A549 (cell line): ENCODE measurements at regions of chr7 and their contacts with region 1.

Region 1: DNA sequence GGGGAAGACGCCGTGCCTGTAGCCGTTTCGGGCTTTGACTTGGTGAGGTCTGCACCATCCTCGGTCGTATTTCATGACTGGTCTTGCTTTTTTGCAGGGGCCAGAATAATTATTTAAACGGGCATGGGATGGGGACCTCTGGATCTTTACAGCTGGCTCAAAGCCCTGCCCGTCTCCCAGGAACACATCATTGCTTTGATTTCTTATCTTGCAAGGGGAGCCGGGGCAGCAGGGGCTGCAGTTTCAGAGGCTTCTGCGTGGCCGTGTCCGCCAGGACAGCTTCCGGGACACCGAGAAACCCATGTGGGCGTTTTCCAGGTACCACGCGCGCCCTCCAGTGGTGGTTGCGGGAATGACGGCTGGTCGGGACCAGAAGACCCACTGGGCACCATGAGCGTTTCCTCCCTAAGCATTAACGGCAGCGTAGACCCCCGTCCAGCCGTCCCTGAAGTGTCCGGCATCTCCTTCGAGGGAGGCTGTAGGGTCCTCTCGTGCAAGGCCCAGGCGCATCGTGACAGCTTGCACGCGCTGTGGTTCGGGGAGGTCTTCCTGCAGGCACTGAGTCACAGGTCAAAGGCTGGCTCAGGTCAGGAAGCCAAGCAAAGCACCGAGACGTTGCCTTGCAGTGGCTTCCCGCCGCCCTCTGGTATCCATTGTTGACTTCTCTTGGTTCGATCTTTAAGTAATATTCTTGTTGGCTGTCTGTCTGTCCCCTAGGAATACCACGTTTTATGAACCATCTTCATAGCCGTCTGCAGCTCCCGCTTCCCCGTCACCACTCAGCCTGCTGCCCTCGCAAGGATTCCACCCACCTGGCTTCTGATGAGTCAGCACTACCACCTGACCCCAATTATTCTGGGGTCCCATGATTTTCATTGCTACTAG is 16.2 kb upstream of the ZFAND2A start:
- DNase-seq: peak; percentile 79 to 85
- ATAC-seq: peak; percentile 86 to 92
- H3K4me3 ChIP-seq: peak overlapping the region; percentile 34
- H3K27ac ChIP-seq: peak overlapping the region; percentile 78 to 87
- H3K4me1 ChIP-seq: peaks cover 11% of the 10 kb centered on the region; the same call in 2 of the 3 replicates
- CTCF ChIP-seq: peak; percentile 86
- EP300 ChIP-seq: no peak
- POLR2A ChIP-seq: 0 out of 2 replicates have a peak, but pooled peaks have one; percentile 23
- RAD21 ChIP-seq: peak; percentile 70 to 79

Region 2: GRCh38 chr7:974820-975681 is 201.2 kb before region 1 on chr7 and contains the start of gene COX19:
- CTCF ChIA-PET with region 1: interaction called, 10 read pairs
- POLR2A ChIA-PET with region 1: no interaction called
- DNase-seq: peak; percentile 68 to 92
- ATAC-seq: peak; percentile 86 to 93
- H3K4me3 ChIP-seq: peak within 1 kb of the TSS; percentile 77
- H3K27ac ChIP-seq: peak within 1 kb of the TSS; percentile 81 to 96
- H3K4me1 ChIP-seq: peaks cover 24% of the 10 kb centered on the region
- CTCF ChIP-seq: no peak
- EP300 ChIP-seq: no peak
- POLR2A ChIP-seq: peak; percentile 68
- RAD21 ChIP-seq: no peak
- polyA plus RNA-seq, gene COX19: 5.4 and 7.6 TPM in 2 replicates

Region 3: DNA sequence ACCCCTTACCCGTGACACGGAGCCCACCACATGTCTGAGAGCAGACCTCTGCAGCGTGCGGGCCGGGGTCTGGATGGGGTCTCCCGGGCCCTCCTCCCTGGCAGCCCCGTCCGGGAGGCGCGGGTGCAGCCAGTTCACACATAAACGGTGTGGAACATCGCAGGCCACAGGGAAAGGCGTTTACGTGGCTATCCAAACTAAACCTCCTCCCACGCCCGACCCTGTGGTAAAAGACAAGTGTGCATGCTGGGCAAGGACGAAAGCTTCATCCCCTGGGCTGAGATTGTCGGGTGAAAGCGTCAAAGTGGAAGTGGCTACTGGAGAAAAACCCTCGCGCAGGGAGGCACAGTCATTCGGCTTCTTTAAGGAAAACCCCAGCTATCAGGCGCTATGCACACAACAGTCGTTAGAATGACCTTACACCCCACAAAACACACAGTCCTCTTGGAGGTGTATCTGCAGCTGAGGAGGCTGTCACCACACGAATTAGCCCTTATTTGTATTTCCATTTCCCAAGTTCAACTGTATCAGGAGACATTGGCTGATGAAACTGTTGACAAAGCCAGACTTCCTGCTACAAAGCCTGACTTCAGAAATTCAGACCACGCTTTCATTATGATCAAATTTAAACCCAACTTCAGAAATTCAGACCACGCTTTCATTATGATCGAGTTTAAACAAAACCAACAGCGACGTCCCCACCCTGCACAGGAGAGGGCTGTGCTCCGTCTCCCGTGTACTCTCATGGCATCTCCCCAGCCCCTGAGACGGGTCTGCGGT is 73.0 kb before region 1 on chr7:
- CTCF ChIA-PET with region 1: interaction called, 12 read pairs
- POLR2A ChIA-PET with region 1: no interaction called
- DNase-seq: no peak
- ATAC-seq: no peak
- H3K4me3 ChIP-seq: no peak overlapping the region
- H3K27ac ChIP-seq: no peak overlapping the region
- H3K4me1 ChIP-seq: no peaks in the 10 kb centered on the region
- CTCF ChIP-seq: no peak
- EP300 ChIP-seq: no peak
- POLR2A ChIP-seq: no peak
- RAD21 ChIP-seq: no peak

Region 4: DNA sequence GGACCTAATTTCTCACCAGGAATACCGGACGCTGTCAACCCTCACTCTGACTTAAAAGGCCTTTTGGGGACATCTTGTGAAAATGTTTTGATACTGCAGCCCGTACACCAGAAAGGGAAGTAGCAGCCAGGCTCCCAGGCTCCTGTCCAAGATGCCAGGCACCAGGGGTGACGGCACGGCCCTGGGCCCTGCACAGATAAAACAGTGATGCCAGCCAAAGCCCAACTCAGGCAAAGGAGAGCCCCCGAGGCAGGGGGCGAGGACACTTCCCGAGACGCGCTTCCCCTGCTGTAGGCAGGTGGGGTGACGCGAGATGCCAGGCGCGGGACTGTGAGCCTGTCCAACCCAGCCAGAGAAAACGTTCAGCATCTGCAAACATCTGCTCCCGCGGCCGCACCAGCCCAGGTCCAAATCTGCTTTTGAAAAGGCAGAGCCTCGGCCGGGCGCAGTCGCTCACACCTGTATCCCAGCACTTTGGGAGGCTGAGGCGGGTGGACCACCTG is 31.9 kb before region 1 on chr7:
- CTCF ChIA-PET with region 1: interaction called, 18 read pairs
- POLR2A ChIA-PET with region 1: no interaction called
- DNase-seq: peak in 1 of 2 experiments; percentile 41
- ATAC-seq: peak; percentile 64 to 75; a peak in 5 of 6 replicates
- H3K4me3 ChIP-seq: no peak overlapping the region
- H3K27ac ChIP-seq: no peak overlapping the region
- H3K4me1 ChIP-seq: no peaks in the 10 kb centered on the region
- CTCF ChIP-seq: no peak
- EP300 ChIP-seq: no peak
- POLR2A ChIP-seq: no peak
- RAD21 ChIP-seq: peak in 1 of 2 experiments; percentile 35; a peak in 2 of 5 replicates

Region 5: GRCh38 chr7:1187127-1187526 is 10.9 kb after region 1 on chr7:
- CTCF ChIA-PET with region 1: interaction called, 57 read pairs
- POLR2A ChIA-PET with region 1: no interaction called
- DNase-seq: no peak
- ATAC-seq: no peak
- H3K4me3 ChIP-seq: no peak overlapping the region
- H3K27ac ChIP-seq: no peak overlapping the region
- H3K4me1 ChIP-seq: no peaks in the 10 kb centered on the region
- CTCF ChIP-seq: no peak
- EP300 ChIP-seq: no peak
- POLR2A ChIP-seq: no peak
- RAD21 ChIP-seq: no peak

Region 6: GRCh38 chr7:1260244-1260635 is 84.0 kb after region 1 on chr7:
- CTCF ChIA-PET with region 1: no interaction called
- POLR2A ChIA-PET with region 1: no interaction called
- DNase-seq: no peak
- ATAC-seq: peak; percentile 16 to 39; a peak in 3 of 6 replicates
- H3K4me3 ChIP-seq: no peak overlapping the region
- H3K27ac ChIP-seq: no peak overlapping the region
- H3K4me1 ChIP-seq: no peaks in the 10 kb centered on the region
- CTCF ChIP-seq: no peak
- EP300 ChIP-seq: no peak
- POLR2A ChIP-seq: no peak
- RAD21 ChIP-seq: no peak